GM10248 (cell line): ENCODE measurements at regions of chr4 and their contacts with region 1.

Region 1: DNA sequence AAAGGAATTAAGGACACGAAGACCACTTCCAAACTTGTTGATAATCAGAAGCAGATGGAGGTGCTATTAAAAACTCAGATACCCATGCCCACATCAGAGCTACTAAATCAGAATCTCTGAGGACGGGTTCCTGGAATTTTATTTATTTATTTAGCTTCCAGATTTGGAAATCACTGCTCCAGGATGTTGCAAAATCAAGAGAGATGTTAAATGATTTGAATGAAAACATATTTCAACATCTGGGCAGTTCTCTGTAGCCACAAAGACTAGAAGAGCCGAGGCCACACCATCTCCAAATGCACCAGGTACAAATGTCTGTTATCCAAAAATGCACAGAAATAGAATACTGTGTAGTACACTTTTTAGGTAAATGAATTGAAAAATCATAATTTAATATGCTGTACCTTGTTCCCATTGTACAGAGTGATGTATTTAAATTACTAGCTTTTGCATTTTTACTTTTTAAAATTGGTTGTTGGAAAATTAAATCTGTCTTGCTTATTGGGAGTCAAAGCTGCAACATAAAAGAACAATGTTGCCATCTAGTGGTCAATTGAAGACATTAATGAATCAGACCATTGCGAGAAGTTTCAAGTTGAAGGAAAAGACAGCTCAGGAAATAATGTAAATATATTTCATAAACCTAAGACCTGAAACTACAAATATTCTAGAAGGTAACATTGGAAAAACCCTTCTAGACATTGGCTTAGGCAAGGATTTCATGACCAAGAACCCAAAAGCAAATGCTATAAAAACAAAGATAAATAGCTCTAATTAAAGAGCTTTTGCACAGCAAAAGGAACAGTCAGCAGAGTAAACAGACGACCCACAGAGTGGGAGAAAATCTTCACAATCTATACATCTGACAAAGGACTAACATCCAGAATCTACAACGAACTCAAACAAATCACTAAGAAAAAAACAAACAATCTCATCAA is 151.3 kb upstream of the TTC29 start:
- DNase-seq: peak; percentile 39
- CTCF ChIP-seq: peak; percentile 60

Region 2: DNA sequence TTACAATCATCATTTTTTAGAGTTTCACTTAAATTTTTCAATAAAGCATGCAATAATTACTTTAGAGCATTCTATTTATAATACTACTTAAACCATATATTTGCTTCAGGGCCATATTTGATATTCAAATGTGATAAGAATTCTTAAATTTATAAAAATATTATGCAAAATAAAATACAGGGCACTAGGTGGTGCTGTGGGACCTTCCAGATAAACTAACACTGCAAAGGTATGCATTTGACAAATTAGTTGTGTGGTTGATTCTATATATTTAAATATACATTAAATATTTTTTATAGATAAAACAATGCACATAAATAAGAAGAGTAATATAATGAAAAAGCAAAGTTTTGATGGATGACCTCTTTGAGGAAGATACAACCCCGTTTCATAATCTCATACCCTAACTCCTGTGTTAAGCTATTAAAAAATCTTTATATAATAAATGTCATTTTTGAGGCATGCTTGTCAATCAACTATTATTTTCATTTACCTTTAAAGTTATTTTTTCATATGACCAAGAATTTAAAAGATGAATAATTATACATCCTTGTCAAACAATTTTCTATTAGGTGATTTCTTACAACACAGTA is 754.2 kb before region 1 on chr4:
- CTCF ChIA-PET with region 1: interaction called, 10 read pairs
- POLR2A ChIA-PET with region 1: no interaction called
- DNase-seq: no peak
- CTCF ChIP-seq: peak; percentile 36

Region 3: GRCh38 chr4:146674829-146675570 is 421.9 kb before region 1 on chr4:
- CTCF ChIA-PET with region 1: no interaction called
- POLR2A ChIA-PET with region 1: no interaction called
- DNase-seq: no peak
- CTCF ChIP-seq: no peak

Region 4: DNA sequence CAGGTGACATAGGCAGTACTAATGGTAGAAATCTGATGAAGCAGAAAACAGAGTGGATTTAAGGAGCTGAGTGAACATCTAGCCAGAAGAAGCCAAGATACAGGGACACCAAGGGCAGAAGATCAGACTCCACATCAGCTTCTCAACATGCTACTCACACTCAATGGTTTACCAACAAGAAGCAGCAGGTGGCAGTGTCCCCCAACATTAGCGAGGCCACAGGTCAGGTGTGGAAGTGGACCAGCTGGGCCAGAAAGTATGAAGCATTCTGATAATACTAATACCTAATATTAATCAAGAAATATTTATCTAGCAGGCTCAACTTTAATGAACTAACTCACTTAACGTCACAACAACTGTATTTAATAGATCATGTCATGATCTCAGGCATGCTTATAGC is 77.9 kb before region 1 on chr4:
- CTCF ChIA-PET with region 1: interaction called, 83 read pairs
- POLR2A ChIA-PET with region 1: no interaction called
- DNase-seq: peak; percentile 29
- CTCF ChIP-seq: peak; percentile 64

Region 5: DNA sequence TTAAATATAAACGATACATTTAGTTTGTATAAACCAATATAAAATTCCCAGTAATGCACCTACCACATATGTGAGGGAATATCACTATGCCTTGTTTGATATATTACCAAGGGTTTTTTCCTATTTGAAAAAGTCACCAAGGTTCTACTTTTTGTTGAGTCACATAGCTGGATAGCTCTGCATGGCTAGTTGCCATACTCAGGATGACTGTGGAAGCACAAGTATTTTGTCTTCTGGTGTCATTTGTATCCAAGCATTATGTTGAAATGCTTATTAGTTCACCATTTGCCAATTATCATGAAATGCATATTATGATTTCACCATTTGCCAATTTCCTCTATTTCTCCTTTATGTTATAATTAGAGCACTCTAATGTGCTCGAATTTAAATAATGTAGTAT is 11.5 kb after region 1 on chr4:
- CTCF ChIA-PET with region 1: interaction called, 16 read pairs
- POLR2A ChIA-PET with region 1: no interaction called
- DNase-seq: no peak
- CTCF ChIP-seq: no peak

Region 6: DNA sequence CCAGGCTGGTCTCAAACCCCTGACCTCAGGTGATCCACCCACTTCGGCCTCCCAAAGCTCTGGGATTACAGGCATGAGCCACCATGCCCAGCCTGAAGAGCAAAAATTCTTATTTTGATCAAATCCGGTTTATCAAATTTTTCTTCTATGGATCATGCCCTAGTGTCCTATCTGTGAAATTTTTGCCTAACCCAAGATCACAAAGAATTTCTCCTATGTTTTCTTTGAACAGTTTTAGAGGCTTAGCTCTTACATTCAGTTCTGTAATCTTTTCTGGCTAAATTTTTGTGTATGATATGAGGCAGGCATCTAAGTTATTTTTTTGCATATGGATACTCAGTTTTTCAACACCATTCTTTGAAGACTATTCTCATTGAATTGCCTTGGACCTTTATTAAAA is 411.4 kb after region 1 on chr4:
- CTCF ChIA-PET with region 1: no interaction called
- POLR2A ChIA-PET with region 1: no interaction called
- DNase-seq: no peak
- CTCF ChIP-seq: no peak